Dendritic cell treated with granulocyte-macrophage colony-stimulating factor and Interleukin-4, amounts not matched to agents 40 ng/mL and 50 ng/mL, for 4 days (primary cell): ENCODE measurements at regions of chr2 and their contacts with region 1.

Region 1: DNA sequence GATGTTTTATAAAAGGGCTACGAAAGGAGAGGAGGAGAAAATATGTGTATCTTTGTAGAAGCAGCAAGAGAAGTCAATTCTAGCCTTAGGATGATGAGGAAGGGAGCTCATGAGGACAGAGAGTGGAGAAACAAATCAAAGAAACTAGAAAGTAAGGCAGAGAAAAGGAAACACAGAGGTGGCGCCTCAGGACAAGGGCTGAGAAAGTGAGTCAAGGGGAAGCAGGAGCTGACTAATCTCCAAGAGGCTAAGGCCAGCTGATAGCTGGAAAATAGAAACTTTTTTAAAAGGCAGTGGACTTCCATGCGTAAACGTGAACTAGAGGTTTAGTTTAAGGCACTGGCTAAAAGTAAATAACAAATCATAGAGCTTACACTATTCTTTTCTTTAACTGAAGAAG is 173.3 kb downstream of the ANKRD44 start:
- H3K4me3 Mint-ChIP-seq: peak overlapping the region; percentile 4
- H3K27ac Mint-ChIP-seq: peak overlapping the region; percentile 51
- H3K4me1 Mint-ChIP-seq: peaks cover 52% of the 10 kb centered on the region
- H3K27me3 Mint-ChIP-seq: no peaks in the 10 kb centered on the region

Region 2: DNA sequence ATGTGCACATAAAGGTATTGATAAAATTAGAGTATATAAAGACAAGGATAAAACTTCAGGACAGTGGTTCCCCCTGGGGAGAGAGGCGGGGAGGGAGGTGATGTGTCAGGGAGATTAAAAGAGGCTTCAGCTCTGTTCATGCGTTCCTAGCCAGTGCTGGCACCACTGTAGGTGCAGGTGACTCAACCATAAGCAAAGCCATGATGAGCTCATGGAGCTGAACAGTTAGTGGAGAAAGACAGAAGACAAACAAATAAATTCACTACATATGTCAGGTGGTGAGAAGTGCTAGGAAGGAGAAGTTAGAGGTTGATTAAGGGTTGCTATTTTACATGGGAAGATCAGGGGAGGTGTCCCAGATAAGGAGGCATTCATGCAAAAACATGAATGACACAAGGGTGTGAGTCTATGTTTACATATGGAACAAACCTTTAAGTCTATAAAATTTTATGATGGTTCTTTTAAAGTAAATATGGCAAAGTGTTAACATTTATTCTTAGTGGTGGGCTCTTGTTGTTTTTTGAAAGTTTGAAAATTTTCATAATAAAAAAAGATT is 37.4 kb after region 1 on chr2:
- intact Hi-C with region 1: loop called (anchors 5 kb)
- H3K4me3 Mint-ChIP-seq: no peak overlapping the region
- H3K27ac Mint-ChIP-seq: no peak overlapping the region
- H3K4me1 Mint-ChIP-seq: peaks cover 43% of the 10 kb centered on the region
- H3K27me3 Mint-ChIP-seq: no peaks in the 10 kb centered on the region

Region 3: GRCh38 chr2:197306696-197307040 is 169.4 kb after region 1 on chr2:
- intact Hi-C with region 1: no loop called
- H3K4me3 Mint-ChIP-seq: peak overlapping the region; percentile 2
- H3K27ac Mint-ChIP-seq: peak overlapping the region; percentile 95
- H3K4me1 Mint-ChIP-seq: peaks cover 70% of the 10 kb centered on the region
- H3K27me3 Mint-ChIP-seq: peaks cover under 1% of the 10 kb centered on the region